OCI-LY7 (cell line): ENCODE measurements at regions of chr10 and their contacts with region 1.

Region 1: GRCh38 chr10:110076559-110077318 is 69.0 kb downstream of the ADD3 start:
- DNase-seq: peak; percentile 69
- H3K4me3 ChIP-seq: peak overlapping the region; percentile 38
- H3K27ac ChIP-seq: peak overlapping the region; percentile 60
- H3K4me1 ChIP-seq: peaks cover 54% of the 10 kb centered on the region
- CTCF ChIP-seq: no peak

Region 2: DNA sequence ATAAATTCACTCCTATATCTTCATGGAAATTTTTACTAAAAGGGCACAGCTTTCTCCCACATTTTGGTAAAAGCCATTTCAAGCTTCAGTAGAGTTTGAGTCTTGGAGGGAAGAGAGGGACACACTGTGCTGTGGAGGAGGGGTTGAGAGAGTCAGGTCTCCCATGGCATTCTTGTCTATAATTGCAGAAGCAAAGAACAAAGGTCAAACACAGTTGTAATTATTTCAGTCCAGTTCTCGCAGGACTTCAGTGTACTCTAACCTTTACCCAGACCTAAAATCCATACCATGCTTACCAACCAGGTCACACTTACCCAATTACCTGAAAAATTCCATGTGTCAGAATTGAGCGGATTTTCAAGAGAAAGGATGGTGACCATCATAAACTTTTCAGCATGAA is 451.8 kb before region 1 on chr10:
- CTCF ChIA-PET with region 1: no interaction called
- POLR2A ChIA-PET with region 1: no interaction called
- intact Hi-C with region 1: no loop called
- DNase-seq: no peak
- H3K4me3 ChIP-seq: no peak overlapping the region
- H3K27ac ChIP-seq: no peak overlapping the region
- H3K4me1 ChIP-seq: no peaks in the 10 kb centered on the region
- CTCF ChIP-seq: no peak

Region 3: DNA sequence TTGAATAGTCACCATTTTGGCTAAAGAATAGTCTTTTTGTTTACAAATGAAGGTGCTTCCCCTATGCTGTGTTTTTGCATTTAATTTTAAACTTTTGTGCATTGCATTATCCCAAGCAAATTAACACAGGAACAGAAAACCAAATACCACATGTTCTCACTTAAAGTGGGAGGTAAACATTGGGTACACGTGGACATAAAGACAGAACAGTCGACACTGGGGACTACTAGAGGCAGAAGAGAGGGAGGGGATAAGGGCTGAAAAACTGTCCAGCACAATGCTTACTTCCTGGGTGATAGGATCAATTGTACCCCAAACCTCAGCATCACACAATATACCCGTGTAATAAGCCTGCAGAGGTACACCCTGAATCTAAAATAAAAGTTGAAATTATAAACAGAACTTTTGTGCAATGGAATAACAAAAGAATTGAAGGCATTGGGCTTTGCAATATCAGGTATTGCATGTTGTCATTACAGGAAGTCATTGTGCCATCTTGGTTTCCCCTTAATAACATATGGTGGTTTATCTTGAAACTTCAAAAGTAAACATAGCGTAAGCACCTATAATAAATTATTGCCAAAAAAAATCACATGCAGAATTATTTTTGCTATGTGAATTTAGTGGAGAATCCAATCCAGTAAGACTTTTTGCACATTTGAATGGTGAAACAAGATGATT is 52.8 kb before region 1 on chr10:
- CTCF ChIA-PET with region 1: no interaction called
- POLR2A ChIA-PET with region 1: no interaction called
- intact Hi-C with region 1: no loop called
- DNase-seq: no peak
- H3K4me3 ChIP-seq: no peak overlapping the region
- H3K27ac ChIP-seq: no peak overlapping the region
- H3K4me1 ChIP-seq: no peaks in the 10 kb centered on the region
- CTCF ChIP-seq: no peak

Region 4: DNA sequence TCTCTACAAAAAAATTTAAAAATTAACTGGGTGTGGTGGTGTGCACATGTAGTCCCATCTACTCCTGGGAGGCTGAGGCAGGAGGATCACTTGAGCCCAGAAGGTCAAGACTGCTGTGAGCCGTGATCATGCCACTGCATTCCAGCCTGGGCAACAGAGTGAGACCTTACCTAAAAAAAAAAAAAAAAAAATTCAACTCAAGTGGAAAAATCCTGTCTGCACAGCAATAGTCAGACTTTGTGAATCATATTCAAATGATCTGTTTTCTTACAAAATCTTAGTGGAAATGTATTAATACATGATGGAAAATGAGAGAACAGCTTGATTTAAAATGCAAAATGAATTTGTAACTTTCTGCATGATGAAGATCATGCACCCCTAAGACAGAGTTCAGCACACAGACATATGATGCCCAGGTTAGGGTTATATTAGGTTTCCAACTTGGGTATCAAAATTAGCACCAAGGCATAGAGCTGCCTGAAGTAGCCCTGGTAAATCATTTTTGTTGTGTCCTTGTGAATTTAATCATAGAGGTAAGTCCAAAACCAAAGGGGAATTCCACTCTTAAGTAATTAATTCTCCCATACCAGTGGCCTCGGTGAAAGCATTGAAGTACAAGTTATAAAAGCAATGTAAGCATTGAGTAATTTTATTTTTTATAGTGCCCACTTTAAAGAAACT is 24.9 kb after region 1 on chr10:
- CTCF ChIA-PET with region 1: no interaction called
- POLR2A ChIA-PET with region 1: interaction called, 10 read pairs
- intact Hi-C with region 1: no loop called
- DNase-seq: no peak
- H3K4me3 ChIP-seq: no peak overlapping the region
- H3K27ac ChIP-seq: no peak overlapping the region
- H3K4me1 ChIP-seq: no peaks in the 10 kb centered on the region
- CTCF ChIP-seq: no peak